ENCODE measurements at regions of chrX and their contacts with region 1.

Region 1: GRCh38 chrX:120250522-120251271 is at the start of gene ZBTB33:
- DNase-seq: peak; percentile 69 to 88 (median 82)
- ATAC-seq: peak; percentile 100
- H3K4me3 ChIP-seq: peak within 1 kb of the TSS; percentile 79
- H3K4me3 Mint-ChIP-seq: peak within 1 kb of the TSS; percentile 84 to 97 (median 94)
- H3K27ac ChIP-seq: peak within 1 kb of the TSS; percentile 96
- H3K27ac Mint-ChIP-seq: peak within 1 kb of the TSS; percentile 93 to 98 (median 96)
- H3K4me1 ChIP-seq: peaks cover 0 to 7% of the 10 kb centered on the region in 2 donors
- H3K4me1 Mint-ChIP-seq: peaks cover 6 to 42% (median 28%) of the 10 kb centered on the region in 7 donors
- H3K27me3 ChIP-seq: no peaks in the 10 kb centered on the region
- H3K27me3 Mint-ChIP-seq: peaks cover 0 to 4% (median 0%) of the 10 kb centered on the region in 5 donors
- total RNA-seq, gene ZBTB33: 15.3 to 30.7 (median 26.3) TPM

Region 2: DNA sequence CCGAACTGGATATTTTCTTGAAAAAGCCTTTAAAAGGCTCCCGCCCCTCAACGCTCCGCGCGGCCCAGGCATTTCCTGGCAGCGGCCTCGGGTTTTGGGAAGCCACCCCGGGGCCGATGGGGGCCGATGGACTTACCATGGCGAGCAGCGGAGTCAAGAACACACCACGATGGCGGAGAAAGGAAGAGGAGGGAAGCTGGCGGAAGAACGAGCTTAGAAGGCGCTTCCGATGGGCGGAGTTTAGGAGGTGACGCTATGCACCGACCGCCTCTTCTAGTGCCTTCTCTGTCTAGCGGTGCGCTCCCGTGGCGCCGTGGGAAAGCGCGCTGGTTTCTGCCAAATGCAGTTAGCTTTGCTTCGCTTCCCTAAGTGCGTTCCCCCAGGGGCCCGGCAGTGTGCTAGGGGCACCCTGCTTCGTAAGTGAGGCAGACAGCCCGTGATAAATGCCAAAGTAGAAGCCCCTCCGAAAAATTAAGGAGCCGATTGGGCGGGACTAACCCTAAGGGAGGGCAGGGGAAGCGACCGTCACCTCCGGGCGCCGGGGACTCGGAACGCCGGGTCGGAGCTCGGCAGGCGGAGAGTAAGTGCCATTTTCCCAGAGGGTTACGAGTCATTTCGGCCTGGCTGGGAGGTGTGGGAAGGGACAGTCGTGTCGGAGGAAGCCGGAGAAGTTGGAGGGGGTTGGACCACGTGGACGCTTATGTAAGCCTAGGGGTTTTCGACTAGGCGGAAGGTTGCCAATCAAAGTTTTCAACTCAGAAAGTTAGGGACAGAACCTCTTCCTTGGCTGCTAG is 459.1 kb before region 1 on chrX and contains the start of gene RPL39:
- CTCF ChIA-PET with region 1: no interaction called
- POLR2A ChIA-PET with region 1: no interaction called
- intact Hi-C with region 1: loop called in 1 of 2 experiments (anchors 5 kb)
- DNase-seq: peak; percentile 61 to 88 (median 82)
- ATAC-seq: peak; percentile 96
- H3K4me3 ChIP-seq: peak within 1 kb of the TSS; percentile 85
- H3K4me3 Mint-ChIP-seq: peak within 1 kb of the TSS; percentile 87 to 96 (median 92)
- H3K27ac ChIP-seq: peak within 1 kb of the TSS; percentile 91
- H3K27ac Mint-ChIP-seq: peak within 1 kb of the TSS; percentile 89 to 98 (median 97)
- H3K4me1 ChIP-seq: peaks cover 16 to 24% of the 10 kb centered on the region in 2 donors
- H3K4me1 Mint-ChIP-seq: peaks cover 5 to 33% (median 21%) of the 10 kb centered on the region in 7 donors
- H3K27me3 ChIP-seq: no peaks in the 10 kb centered on the region
- H3K27me3 Mint-ChIP-seq: no peaks in the 10 kb centered on the region
- total RNA-seq, gene RPL39: 2,181 to 4,347 (median 3,799) TPM

Region 3: GRCh38 chrX:120269373-120270035 is 18.8 kb after region 1 on chrX:
- CTCF ChIA-PET with region 1: interaction called, 5 read pairs
- POLR2A ChIA-PET with region 1: interaction called, 14 read pairs
- intact Hi-C with region 1: loop called in 1 of 2 experiments (anchors 1 kb)
- DNase-seq: peak in 7 of 9 donors; percentile 4 to 58 (median 31)
- ATAC-seq: peak; percentile 98
- H3K4me3 ChIP-seq: no peak overlapping the region
- H3K4me3 Mint-ChIP-seq: peak overlapping the region in 2 of 10 donors; percentile 20 to 44
- H3K27ac ChIP-seq: peak overlapping the region; percentile 38
- H3K27ac Mint-ChIP-seq: peak overlapping the region; percentile 34 to 88 (median 76)
- H3K4me1 ChIP-seq: peaks cover 0 to 12% of the 10 kb centered on the region in 2 donors
- H3K4me1 Mint-ChIP-seq: peaks cover 2 to 17% (median 14%) of the 10 kb centered on the region in 7 donors
- H3K27me3 ChIP-seq: no peaks in the 10 kb centered on the region
- H3K27me3 Mint-ChIP-seq: peaks cover 0 to 4% (median 0%) of the 10 kb centered on the region in 5 donors

Region 4: DNA sequence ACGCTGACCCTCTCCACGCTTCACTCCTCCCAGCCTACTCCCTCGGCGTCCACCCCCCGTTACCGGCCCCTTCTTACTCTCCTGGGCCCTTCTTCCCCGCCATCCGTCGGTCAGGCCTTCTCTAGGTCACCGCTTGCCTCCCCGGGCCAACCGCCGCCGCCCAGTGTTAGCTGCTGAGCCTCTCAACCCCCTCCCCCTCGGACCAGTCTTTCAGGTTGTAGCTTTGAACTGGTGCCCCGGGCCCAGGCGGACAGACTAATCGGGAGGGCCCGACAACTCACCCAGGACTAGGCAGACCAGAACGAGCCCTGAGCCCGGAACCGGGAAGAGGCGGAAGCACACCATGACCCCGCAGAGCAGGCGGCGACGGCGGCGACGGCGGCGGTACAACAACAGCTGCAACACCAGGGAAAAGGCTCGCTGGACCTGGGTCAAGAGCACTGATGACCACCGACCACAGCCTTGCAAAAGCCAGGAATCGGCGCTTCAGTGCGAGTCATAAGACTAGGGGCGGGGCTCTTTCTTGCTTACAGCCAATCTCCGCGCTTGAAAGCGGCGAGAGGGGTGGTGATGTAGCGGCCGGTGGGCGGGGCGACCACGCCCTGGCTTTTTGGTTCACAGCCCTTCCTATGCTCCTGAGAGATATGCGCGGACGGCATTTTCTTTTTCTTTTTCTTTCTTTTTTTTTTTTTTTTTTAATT is 218.3 kb after region 1 on chrX and contains the start of gene LAMP2:
- CTCF ChIA-PET with region 1: no interaction called
- POLR2A ChIA-PET with region 1: no interaction called
- intact Hi-C with region 1: loop called (anchors 5 kb)
- DNase-seq: peak; percentile 58 to 78 (median 72)
- ATAC-seq: peak; percentile 99
- H3K4me3 ChIP-seq: peak within 1 kb of the TSS; percentile 79
- H3K4me3 Mint-ChIP-seq: peak within 1 kb of the TSS; percentile 89 to 99 (median 94)
- H3K27ac ChIP-seq: peak within 1 kb of the TSS; percentile 80
- H3K27ac Mint-ChIP-seq: peak within 1 kb of the TSS; percentile 76 to 94 (median 92)
- H3K4me1 ChIP-seq: peaks cover 0 to 7% of the 10 kb centered on the region in 2 donors
- H3K4me1 Mint-ChIP-seq: peaks cover 5 to 40% (median 29%) of the 10 kb centered on the region in 7 donors
- H3K27me3 ChIP-seq: no peaks in the 10 kb centered on the region
- H3K27me3 Mint-ChIP-seq: no peaks in the 10 kb centered on the region
- total RNA-seq, gene LAMP2: 22.5 to 60.3 (median 44.9) TPM

Region 5: GRCh38 chrX:120560842-120561633 is 310.3 kb after region 1 on chrX and contains the start of gene CUL4B:
- CTCF ChIA-PET with region 1: no interaction called
- POLR2A ChIA-PET with region 1: no interaction called
- intact Hi-C with region 1: loop called (anchors 5 kb)
- DNase-seq: peak; percentile 73 to 95 (median 92)
- ATAC-seq: peak; percentile 96
- H3K4me3 ChIP-seq: peak within 1 kb of the TSS; percentile 87
- H3K4me3 Mint-ChIP-seq: peak within 1 kb of the TSS; percentile 87 to 99 (median 98)
- H3K27ac ChIP-seq: peak within 1 kb of the TSS; percentile 100
- H3K27ac Mint-ChIP-seq: peak within 1 kb of the TSS; percentile 88 to 100 (median 95)
- H3K4me1 ChIP-seq: peaks cover 0 to 3% of the 10 kb centered on the region in 2 donors
- H3K4me1 Mint-ChIP-seq: peaks cover 6 to 32% (median 26%) of the 10 kb centered on the region in 7 donors
- H3K27me3 ChIP-seq: no peaks in the 10 kb centered on the region
- H3K27me3 Mint-ChIP-seq: no peaks in the 10 kb centered on the region
- total RNA-seq, gene CUL4B: 34.9 to 67.7 (median 43.0) TPM

Measured in naive thymus-derived CD4-positive, alpha-beta T cell (primary cell).